Activated CD4-positive, alpha-beta T cell treated with anti-CD3 and anti-CD28 coated beads, Interleukin-2, amount 10 ng/mL, durations not matched to agents 24 days and 14 days (primary cell): ENCODE measurements at regions of chr1 and their contacts with region 1.

Region 1: DNA sequence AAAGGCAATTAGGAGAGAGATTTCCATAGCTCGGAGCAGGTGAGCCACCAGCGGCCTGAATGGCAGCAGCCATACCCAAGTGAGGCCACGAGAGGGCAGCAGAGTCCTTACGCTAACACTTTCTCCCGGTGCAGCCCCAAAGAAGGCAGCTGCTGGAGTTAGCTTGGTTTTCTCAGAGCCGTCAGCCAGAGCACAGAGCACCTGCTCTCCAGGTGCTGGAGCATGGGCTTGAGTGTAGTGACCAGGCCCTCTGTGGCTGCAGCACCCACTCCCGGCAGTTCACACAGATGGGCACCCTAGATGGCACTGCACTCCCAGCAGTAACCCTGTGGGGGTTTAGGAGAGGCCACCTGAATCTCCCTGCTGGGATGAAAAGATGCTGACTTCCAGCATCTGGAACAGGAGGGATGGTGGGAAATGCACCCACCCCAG is 45.8 kb downstream of the TMCC2 start:
- DNase-seq: peak; percentile 95
- H3K4me3 Mint-ChIP-seq: no peak overlapping the region
- H3K27ac Mint-ChIP-seq: no peak overlapping the region
- H3K4me1 Mint-ChIP-seq: peaks cover 26% of the 10 kb centered on the region
- H3K27me3 Mint-ChIP-seq: peaks cover 2% of the 10 kb centered on the region

Region 2: DNA sequence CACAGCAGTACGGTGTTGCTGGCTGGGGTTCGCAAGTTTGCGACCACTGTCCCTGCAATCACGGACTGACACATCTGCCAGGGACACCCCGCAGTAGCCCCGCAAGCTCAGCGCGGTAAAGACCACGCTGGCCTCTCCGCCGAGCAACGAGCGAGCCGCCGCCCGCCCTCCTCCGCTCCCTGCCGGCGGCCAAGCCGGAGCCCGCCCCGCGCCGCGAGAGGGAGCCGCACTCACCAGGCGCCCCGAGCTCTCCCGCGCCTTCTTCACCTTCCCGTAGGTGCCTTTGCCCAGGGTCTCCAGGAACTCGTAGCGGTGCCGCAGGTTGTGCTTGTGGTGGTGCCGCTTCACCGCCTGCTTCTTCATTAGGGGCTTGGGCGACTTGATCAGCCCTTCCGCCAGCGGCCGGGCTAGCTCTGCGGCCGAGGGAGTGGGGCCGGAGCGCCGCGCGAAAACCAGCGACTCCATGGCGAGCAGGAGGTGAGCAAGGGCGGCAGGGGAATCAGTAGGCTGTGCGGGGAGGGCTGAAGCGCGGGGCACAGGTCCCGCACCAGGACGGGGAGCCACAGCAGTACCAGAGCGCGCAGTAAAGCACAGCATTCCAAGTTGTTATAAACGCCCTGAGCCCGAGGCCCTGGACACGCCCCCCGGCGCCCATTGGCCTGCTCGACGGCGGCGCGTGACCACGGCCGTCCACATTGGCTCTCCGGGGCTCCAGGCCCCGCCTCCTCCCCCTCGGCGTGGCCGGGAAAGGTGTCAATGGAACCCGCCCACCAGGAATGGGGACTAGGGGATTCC is 47.8 kb after region 1 on chr1 and contains the start of gene NUAK2:
- intact Hi-C with region 1: loop called (anchors 1 kb)
- DNase-seq: peak; percentile 95
- H3K4me3 Mint-ChIP-seq: peak within 1 kb of the TSS; percentile 88
- H3K27ac Mint-ChIP-seq: peak within 1 kb of the TSS; percentile 86
- H3K4me1 Mint-ChIP-seq: peaks cover 57% of the 10 kb centered on the region
- H3K27me3 Mint-ChIP-seq: peaks cover 6% of the 10 kb centered on the region
- total RNA-seq, gene NUAK2: 0.80 and 1.0 TPM in 2 replicates

Region 3: DNA sequence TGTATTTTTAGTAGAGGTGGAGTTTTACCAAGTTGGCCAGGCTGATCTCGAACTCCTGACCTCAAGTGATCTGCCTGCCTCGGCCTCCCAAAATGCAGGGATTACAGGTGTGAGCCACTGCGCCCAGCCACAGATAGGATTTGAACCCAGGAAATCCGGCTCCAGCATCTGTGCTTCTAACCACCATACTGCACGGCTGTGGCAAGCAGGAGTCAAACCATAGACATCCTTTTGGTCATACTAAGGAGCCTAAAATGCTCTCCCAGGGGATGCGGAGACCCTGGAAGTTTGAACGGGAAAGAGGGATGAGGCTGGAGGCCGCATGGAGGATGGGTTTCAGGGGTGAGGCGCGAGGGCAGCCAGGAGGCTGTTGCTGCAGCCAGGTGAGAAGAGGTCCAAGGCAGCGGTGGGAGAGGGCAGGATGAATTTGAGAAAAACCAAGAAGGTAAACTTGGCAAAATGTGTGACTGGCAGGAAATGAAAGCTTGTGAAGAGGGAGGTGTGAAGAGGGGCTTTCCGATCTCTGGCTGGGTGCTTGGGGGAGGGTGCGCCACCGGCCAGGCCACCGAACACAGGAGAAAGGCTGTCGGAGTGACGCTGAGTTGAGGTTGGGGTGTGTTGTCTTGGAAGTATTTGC is 206.9 kb after region 1 on chr1:
- intact Hi-C with region 1: loop called (anchors 5 kb)
- DNase-seq: peak; percentile 80
- H3K4me3 Mint-ChIP-seq: peak overlapping the region; percentile 36
- H3K27ac Mint-ChIP-seq: peak overlapping the region; percentile 27
- H3K4me1 Mint-ChIP-seq: peaks cover 18% of the 10 kb centered on the region
- H3K27me3 Mint-ChIP-seq: peaks cover 33% of the 10 kb centered on the region